B cell (primary cell): ENCODE measurements at regions of chr1 and their contacts with region 1.

Region 1: DNA sequence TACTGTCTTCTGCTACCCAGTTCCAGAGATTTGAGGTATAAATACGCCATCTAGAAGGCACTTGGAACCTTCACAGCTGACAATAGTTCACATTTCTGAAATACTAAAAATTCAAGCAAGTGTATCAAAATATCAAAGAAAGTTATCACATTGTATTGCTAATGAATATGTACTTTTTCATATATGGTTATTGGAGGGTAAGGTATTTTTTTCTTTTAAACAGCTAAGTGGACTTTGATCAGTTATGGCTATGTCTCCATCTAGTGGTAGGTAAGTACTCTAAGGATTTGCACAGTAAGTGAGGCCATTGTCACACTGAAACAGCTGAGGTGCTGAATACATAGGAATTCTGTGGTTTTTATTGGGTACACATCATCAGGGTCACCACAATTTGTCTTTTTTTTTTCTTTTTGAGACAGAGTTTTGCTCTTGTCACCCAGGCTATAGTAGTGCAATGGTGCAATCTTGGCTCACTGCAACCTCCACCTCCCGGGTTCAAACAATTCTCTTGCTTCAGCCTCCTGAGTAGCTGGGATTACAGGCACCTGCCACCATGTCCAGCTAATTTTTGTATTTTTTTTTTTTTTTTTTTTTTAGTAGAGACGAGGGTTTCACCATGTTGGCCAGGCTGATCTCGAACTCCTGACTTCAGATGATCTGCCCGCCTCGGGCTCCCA is 49.1 kb upstream of the CR2 start:
- DNase-seq: peak; percentile 77
- ATAC-seq: peak; percentile 71
- H3K4me3 ChIP-seq: no peak overlapping the region
- H3K4me3 Mint-ChIP-seq: no peak overlapping the region
- H3K27ac ChIP-seq: no peak overlapping the region
- H3K27ac Mint-ChIP-seq: peak overlapping the region; percentile 74
- H3K4me1 ChIP-seq: peaks cover 18 to 27% of the 10 kb centered on the region in 2 donors
- H3K4me1 Mint-ChIP-seq: peaks cover 30% of the 10 kb centered on the region
- H3K27me3 ChIP-seq: no peaks in the 10 kb centered on the region
- H3K27me3 Mint-ChIP-seq: no peaks in the 10 kb centered on the region
- CTCF ChIP-seq: peak; percentile 92

Region 2: DNA sequence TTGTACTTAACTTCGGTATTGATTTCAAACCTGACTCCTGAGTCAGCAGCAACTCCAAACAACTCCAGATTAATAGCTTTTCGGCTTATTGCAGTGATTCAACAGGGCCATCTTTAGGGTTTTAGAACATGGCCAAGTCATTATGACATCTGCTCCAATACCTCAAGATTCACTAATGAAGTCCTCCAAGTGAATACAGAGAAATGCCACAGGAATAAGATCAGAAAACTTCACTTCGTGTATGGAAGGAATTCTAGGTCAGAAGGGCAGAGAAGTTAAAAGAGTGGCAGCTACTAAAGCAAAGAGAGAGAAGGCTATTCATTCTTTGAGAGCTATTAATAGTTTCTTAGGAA is 364.8 kb before region 1 on chr1:
- CTCF ChIA-PET with region 1: no interaction called
- POLR2A ChIA-PET with region 1: no interaction called
- intact Hi-C with region 1: no loop called
- DNase-seq: no peak
- ATAC-seq: no peak
- H3K4me3 ChIP-seq: no peak overlapping the region
- H3K4me3 Mint-ChIP-seq: no peak overlapping the region
- H3K27ac ChIP-seq: no peak overlapping the region
- H3K27ac Mint-ChIP-seq: no peak overlapping the region
- H3K4me1 ChIP-seq: no peaks in the 10 kb centered on the region
- H3K4me1 Mint-ChIP-seq: peaks cover 3% of the 10 kb centered on the region
- H3K27me3 ChIP-seq: peaks cover 0 to 5% (median 0%) of the 10 kb centered on the region in 4 experiments
- H3K27me3 Mint-ChIP-seq: peaks cover 2% of the 10 kb centered on the region
- CTCF ChIP-seq: no peak

Region 3: DNA sequence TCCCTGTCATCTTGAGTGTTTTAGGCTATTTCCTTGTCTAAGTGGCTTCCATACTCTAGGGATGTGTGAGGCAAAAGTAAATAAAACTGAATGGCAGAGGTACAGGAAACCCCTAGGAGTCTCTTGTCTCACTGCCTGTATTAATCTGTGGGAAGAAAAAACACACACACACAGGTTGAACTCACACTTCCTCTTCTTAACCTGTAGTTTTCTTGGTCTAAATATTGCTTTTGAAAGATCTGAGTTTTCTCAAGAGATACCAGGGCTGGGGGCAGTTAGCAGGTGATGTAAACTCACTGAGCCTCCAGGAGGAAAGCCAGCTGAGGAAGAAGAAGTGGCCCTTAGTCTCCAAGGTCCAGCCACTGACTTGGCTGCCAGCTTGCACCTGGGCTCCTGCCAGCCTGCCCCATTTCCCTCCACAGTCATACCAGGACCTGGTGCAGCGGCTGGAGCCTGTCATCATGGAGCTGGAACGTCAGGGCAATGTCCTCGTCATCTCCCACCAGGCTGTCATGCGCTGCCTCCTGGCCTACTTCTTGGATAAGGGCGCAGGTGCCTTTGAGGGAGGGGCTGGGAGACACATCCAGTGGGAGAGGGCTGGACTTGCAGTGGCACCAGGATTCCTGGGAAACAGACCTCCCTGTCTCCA is 335.0 kb before region 1 on chr1:
- CTCF ChIA-PET with region 1: interaction called, 17 read pairs
- POLR2A ChIA-PET with region 1: no interaction called
- intact Hi-C with region 1: no loop called
- DNase-seq: peak; percentile 29
- ATAC-seq: no peak
- H3K4me3 ChIP-seq: no peak overlapping the region
- H3K4me3 Mint-ChIP-seq: no peak overlapping the region
- H3K27ac ChIP-seq: peak overlapping the region in 1 of 2 donors; percentile 37
- H3K27ac Mint-ChIP-seq: peak overlapping the region; percentile 39
- H3K4me1 ChIP-seq: peaks cover 20 to 23% of the 10 kb centered on the region in 2 donors
- H3K4me1 Mint-ChIP-seq: peaks cover 22% of the 10 kb centered on the region
- H3K27me3 ChIP-seq: no peaks in the 10 kb centered on the region
- H3K27me3 Mint-ChIP-seq: no peaks in the 10 kb centered on the region
- CTCF ChIP-seq: no peak

Region 4: DNA sequence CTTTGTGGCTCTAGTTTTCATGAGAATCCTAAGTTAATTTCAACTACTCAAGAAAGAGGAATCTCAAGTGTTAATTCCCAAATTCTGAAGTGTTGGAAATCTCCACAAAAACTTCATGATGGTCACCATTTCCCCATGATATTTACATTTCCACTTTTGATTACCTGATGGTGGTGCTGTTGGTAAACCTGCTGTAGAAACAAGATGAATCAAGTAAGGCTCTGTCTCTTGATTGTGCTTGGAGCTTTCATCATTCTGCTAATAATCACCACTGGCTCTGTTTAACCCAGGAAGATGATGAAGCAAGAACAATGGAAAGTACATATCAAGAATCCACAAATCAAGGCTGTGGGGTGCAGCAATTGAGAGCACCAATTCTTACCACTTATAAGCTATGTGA is 223.1 kb before region 1 on chr1:
- CTCF ChIA-PET with region 1: interaction called, 78 read pairs
- POLR2A ChIA-PET with region 1: no interaction called
- intact Hi-C with region 1: loop called (anchors 1 kb)
- DNase-seq: peak; percentile 54
- ATAC-seq: no peak
- H3K4me3 ChIP-seq: no peak overlapping the region
- H3K4me3 Mint-ChIP-seq: no peak overlapping the region
- H3K27ac ChIP-seq: no peak overlapping the region
- H3K27ac Mint-ChIP-seq: no peak overlapping the region
- H3K4me1 ChIP-seq: no peaks in the 10 kb centered on the region
- H3K4me1 Mint-ChIP-seq: peaks cover 11% of the 10 kb centered on the region
- H3K27me3 ChIP-seq: no peaks in the 10 kb centered on the region
- H3K27me3 Mint-ChIP-seq: peaks cover 6% of the 10 kb centered on the region
- CTCF ChIP-seq: peak; percentile 43

Region 5: GRCh38 chr1:207423560-207424292 is 18.7 kb after region 1 on chr1:
- CTCF ChIA-PET with region 1: interaction called, 14 read pairs
- POLR2A ChIA-PET with region 1: interaction called, 3 read pairs
- intact Hi-C with region 1: no loop called
- DNase-seq: no peak
- ATAC-seq: peak; percentile 39
- H3K4me3 ChIP-seq: peak overlapping the region in 3 of 5 experiments; percentile 0 to 40 (median 27)
- H3K4me3 Mint-ChIP-seq: peak overlapping the region; percentile 89
- H3K27ac ChIP-seq: no peak overlapping the region
- H3K27ac Mint-ChIP-seq: peak overlapping the region; percentile 72
- H3K4me1 ChIP-seq: peaks cover 59 to 71% of the 10 kb centered on the region in 2 donors
- H3K4me1 Mint-ChIP-seq: peaks cover 67% of the 10 kb centered on the region
- H3K27me3 ChIP-seq: no peaks in the 10 kb centered on the region
- H3K27me3 Mint-ChIP-seq: no peaks in the 10 kb centered on the region
- CTCF ChIP-seq: no peak

Region 6: DNA sequence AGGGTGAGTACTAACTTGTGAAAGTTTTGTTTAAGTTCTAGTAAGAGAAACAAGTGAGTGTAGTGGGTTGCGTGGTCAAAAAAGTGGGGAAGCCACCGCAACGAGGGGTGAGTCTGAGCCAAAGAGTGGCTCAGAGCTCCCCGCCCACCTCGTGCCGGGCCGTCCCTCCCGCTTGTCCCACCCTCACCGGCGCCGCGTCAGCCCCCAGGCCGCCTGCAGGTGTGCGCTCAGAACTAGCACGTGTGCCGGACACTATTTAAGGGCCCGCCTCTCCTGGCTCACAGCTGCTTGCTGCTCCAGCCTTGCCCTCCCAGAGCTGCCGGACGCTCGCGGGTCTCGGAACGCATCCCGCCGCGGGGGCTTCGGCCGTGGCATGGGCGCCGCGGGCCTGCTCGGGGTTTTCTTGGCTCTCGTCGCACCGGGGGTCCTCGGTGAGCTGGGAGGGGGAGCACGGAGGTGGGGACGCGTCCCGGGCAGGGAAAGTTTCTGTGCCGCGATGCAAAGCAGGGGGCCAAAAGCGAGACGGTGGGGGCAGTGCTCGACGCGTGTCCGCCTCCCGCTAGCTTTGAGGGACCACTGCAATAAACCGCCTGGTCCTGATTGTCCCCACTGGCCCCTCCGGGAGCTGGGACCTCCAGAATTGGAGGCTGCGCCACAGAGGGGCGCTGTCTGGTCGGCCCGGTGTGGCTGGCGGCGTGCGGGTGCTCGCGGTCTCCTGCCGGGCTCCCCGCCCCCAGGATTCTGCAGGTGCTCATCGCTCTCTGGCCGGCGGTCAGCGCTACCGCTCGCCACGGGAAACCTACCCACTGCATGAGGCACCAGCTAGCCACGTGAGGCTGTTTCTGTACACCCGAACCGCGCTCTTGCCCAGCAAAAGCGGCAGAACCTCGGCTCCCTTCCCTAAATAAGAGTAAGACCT is 49.3 kb after region 1 on chr1 and contains the start of gene CR2:
- CTCF ChIA-PET with region 1: interaction called, 50 read pairs
- POLR2A ChIA-PET with region 1: interaction called, 4 read pairs
- intact Hi-C with region 1: no loop called
- DNase-seq: peak; percentile 89
- ATAC-seq: peak; percentile 92
- H3K4me3 ChIP-seq: peak within 1 kb of the TSS; percentile 75 to 90 (median 84)
- H3K4me3 Mint-ChIP-seq: peak within 1 kb of the TSS; percentile 86
- H3K27ac ChIP-seq: peak within 1 kb of the TSS; percentile 69 to 82
- H3K27ac Mint-ChIP-seq: peak within 1 kb of the TSS; percentile 79
- H3K4me1 ChIP-seq: peaks cover 44 to 46% of the 10 kb centered on the region in 2 donors
- H3K4me1 Mint-ChIP-seq: peaks cover 15% of the 10 kb centered on the region
- H3K27me3 ChIP-seq: no peaks in the 10 kb centered on the region
- H3K27me3 Mint-ChIP-seq: no peaks in the 10 kb centered on the region
- CTCF ChIP-seq: peak; percentile 75
- total RNA-seq, gene CR2: 28.1 and 30.5 TPM in 2 replicates

Region 7: DNA sequence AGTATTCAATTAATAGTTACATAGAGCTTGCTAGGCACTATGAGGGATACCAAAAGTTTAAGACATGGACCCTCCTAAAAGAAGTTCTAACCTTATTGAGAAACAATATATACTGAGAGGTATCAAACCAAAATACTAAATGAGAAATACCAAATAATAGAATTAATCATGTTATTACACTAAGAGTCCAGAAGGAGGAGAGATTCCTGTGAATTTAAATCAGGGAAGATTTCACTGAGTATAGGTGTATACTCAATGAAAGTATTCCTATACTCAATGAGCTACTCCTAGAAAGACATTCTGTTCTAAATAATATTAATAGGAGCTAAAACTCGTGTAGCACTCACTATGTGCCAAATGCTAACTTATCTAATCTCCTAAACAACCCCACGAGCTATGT is 249.3 kb after region 1 on chr1:
- CTCF ChIA-PET with region 1: no interaction called
- POLR2A ChIA-PET with region 1: no interaction called
- intact Hi-C with region 1: no loop called
- DNase-seq: no peak
- ATAC-seq: no peak
- H3K4me3 ChIP-seq: no peak overlapping the region
- H3K4me3 Mint-ChIP-seq: no peak overlapping the region
- H3K27ac ChIP-seq: no peak overlapping the region
- H3K27ac Mint-ChIP-seq: no peak overlapping the region
- H3K4me1 ChIP-seq: no peaks in the 10 kb centered on the region
- H3K4me1 Mint-ChIP-seq: no peaks in the 10 kb centered on the region
- H3K27me3 ChIP-seq: no peaks in the 10 kb centered on the region
- H3K27me3 Mint-ChIP-seq: no peaks in the 10 kb centered on the region
- CTCF ChIP-seq: no peak